ENCODE measurements at regions of chr11 and their contacts with region 1.

Region 1: GRCh38 chr11:7098235-7098832 is 9.5 kb downstream of the RBMXL2 start:
- DNase-seq: no peak
- ATAC-seq: peak; percentile 68
- H3K4me3 Mint-ChIP-seq: no peak overlapping the region
- H3K27ac Mint-ChIP-seq: no peak overlapping the region
- H3K4me1 Mint-ChIP-seq: no peaks in the 10 kb centered on the region
- H3K27me3 Mint-ChIP-seq: peaks cover 6% of the 10 kb centered on the region
- CTCF ChIP-seq: peak; percentile 53

Region 2: DNA sequence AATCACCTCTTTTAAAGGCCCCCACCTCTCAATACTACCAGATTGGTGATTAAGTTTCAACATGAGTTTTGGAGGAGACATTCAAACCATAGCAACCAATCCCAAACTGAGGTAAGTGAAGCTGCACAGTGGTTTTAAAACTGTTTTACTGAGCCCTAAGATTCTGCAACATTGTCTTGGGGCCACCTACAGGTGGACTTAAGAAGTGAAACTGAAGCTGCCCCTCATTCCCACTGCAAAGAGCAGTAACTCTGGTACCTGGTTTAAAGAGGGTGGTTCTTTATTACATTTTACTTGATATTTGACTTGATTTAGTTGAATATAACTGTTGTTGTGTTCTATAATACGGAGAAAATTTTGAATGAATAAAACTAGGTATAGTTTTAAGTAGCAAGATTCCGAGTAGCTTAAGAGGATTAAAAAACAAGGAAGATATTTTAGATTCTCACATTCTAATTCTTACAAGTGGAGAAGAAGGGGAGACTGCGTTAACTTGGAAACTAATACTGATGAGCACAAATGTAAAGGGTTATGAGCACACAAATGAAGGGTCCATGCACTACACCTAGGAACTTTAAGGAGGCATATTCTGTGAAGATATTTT is 180.1 kb after region 1 on chr11:
- CTCF ChIA-PET with region 1: interaction called, 11 read pairs
- POLR2A ChIA-PET with region 1: no interaction called
- intact Hi-C with region 1: no loop called
- DNase-seq: peak; percentile 7
- ATAC-seq: no peak
- H3K4me3 Mint-ChIP-seq: no peak overlapping the region
- H3K27ac Mint-ChIP-seq: no peak overlapping the region
- H3K4me1 Mint-ChIP-seq: no peaks in the 10 kb centered on the region
- H3K27me3 Mint-ChIP-seq: peaks cover 13% of the 10 kb centered on the region
- CTCF ChIP-seq: peak; percentile 58

Region 3: GRCh38 chr11:7442588-7443215 is 344.4 kb after region 1 on chr11:
- CTCF ChIA-PET with region 1: interaction called, 20 read pairs
- POLR2A ChIA-PET with region 1: no interaction called
- intact Hi-C with region 1: loop called (anchors 5 kb)
- DNase-seq: peak; percentile 87
- ATAC-seq: peak; percentile 97
- H3K4me3 Mint-ChIP-seq: no peak overlapping the region
- H3K27ac Mint-ChIP-seq: no peak overlapping the region
- H3K4me1 Mint-ChIP-seq: no peaks in the 10 kb centered on the region
- H3K27me3 Mint-ChIP-seq: no peaks in the 10 kb centered on the region
- CTCF ChIP-seq: peak; percentile 82

Region 4: GRCh38 chr11:7690648-7691047 is 592.3 kb after region 1 on chr11:
- CTCF ChIA-PET with region 1: interaction called, 9 read pairs
- POLR2A ChIA-PET with region 1: no interaction called
- intact Hi-C with region 1: loop called (anchors 5 kb)
- DNase-seq: no peak
- ATAC-seq: no peak
- H3K4me3 Mint-ChIP-seq: no peak overlapping the region
- H3K27ac Mint-ChIP-seq: no peak overlapping the region
- H3K4me1 Mint-ChIP-seq: peaks cover 4% of the 10 kb centered on the region
- H3K27me3 Mint-ChIP-seq: peaks cover 31% of the 10 kb centered on the region
- CTCF ChIP-seq: no peak